HAP-1 (cell line): ENCODE measurements at regions of chr7 and their contacts with region 1.

Region 1: DNA sequence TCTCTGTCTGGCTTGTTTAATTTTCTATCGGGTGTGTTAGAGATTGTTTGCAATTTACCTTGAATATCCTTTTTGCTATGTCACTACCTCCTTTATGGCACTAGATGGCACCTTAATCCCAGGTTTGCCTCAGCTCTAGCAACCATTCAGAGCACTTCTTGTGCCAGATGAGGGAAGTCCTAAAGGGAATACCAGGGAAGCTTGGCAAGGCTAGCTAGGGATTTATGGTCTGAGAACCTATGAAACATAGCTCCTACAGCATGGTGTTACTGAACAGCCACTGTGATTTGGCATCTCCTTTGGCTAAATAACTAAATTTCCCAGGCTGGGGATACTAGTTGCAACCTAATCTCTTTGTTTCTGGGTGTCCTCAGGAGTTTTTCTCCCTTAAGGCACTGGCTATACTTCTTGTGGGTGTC is 69.0 kb upstream of the VOPP1 start:
- DNase-seq: peak; percentile 46 to 59
- H3K4me3 ChIP-seq: no peak overlapping the region
- H3K4me1 ChIP-seq: no peaks in the 10 kb centered on the region
- H3K27me3 ChIP-seq: no peaks in the 10 kb centered on the region

Region 2: DNA sequence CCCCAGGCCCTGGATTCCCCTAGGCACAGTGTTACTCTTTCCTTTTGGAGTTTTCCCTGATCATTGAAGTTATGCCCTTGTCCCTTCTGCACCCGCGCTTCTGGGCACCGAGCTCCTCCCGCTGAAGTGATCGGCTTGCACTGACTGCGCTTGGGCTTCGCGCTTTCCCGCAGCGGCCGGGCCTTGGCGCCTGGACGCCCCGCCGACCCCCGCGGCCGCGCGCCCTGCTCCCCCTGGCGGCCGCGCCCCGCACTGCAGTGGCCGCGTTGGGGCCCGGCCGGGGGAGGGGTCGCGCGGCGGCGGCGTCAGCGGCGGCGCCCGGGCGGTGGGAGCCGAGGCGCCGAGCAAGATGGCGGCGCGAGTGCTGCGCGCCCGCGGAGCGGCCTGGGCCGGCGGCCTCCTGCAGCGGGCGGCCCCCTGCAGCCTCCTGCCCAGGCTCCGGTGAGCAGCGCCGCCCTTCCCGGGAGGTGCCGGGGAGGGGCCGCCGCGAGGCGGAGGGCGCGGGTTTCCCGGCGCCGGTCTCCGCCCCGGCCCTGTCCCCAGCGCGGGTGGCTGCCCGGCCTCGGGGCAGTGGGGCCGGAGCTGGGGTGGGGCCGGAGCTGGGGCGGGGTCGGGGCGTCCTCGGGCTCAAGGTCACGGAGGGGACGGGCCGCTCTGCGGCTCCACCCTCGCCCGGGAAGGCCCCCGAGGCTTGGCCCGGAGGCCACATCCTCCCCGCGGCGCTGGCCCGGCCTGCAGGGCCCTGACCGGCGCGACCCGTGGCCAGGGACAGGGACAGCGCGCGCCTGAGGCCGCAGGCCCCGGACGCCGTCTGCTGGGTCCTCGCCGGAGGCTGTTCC is 323.2 kb after region 1 on chr7 and contains the start of gene NIPSNAP2:
- in situ Hi-C with region 1: loop called (anchors 10 kb)
- DNase-seq: peak; percentile 41 to 77
- H3K4me3 ChIP-seq: peak within 1 kb of the TSS; percentile 60
- H3K4me1 ChIP-seq: peaks cover 3% of the 10 kb centered on the region
- H3K27me3 ChIP-seq: no peaks in the 10 kb centered on the region

Region 3: DNA sequence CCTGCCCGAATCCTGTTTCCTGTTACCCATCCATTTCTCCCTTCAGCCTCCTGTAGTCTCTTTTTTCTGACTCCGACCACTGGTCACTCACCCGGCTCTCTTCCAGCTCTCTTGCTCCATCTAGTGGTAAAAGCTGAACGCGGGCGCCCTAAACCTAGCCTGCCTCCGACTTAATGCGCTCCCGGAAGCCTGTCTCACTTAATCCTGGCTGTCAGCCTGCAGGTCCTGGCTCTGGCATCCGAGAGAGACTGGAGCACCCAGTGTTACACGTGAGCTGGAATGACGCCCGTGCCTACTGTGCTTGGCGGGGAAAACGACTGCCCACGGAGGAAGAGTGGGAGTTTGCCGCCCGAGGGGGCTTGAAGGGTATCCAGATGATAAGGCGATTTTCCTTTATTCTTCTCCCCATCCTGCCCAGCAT is 433.1 kb after region 1 on chr7:
- in situ Hi-C with region 1: loop called (anchors 10 kb)
- DNase-seq: peak; percentile 71 to 85
- H3K4me3 ChIP-seq: no peak overlapping the region
- H3K4me1 ChIP-seq: no peaks in the 10 kb centered on the region
- H3K27me3 ChIP-seq: no peaks in the 10 kb centered on the region